ENCODE measurements at regions of chr2 and their contacts with region 1.

Region 1: DNA sequence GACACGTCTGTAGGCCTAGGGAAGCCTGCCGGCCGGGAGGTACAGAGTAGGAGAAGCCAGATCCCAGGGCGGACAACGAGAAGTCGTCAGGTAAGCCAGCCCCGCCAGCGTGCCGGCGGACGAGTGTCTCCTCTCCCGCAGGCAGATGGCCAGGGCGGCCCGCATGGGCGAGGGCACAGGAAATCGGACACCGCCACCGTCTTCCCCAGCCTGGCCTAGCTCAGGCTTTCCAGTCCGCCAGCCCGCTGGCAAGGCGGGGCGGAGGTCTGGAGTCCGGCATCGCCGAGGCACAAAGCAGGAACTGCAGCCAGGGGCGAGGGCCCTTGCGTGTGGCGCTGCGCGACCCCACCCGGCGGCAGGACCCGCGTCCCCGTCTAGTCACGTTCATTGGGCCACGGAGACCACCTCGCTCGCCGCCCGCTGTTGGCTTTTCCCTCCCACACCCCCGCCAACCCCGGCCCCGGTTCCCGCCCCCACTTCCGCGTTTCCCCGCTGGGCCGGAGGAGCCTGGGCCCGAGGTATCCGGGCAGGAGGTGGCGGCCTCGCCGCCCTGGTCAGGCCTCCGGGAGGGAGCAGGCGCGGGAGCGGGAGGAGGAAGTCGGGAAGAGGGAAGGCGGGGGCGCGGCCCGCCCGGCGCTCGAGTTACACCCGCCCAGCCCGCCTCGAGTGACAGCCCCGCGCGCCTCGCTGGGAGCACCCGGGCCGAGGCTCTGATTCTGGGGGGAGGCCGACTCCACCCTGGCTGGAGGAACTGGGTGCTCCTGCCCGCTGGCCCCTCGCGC is at the start of gene GPD2:
- DNase-seq: peak; percentile 96 to 98
- ATAC-seq: peak; percentile 98
- H3K4me3 ChIP-seq: peak within 1 kb of the TSS; percentile 71 to 78
- H3K27ac ChIP-seq: peak within 1 kb of the TSS; percentile 87 to 98
- H3K4me1 ChIP-seq: peaks cover 0 to 4% of the 10 kb centered on the region in 2 donors
- H3K27me3 ChIP-seq: no peaks in the 10 kb centered on the region
- total RNA-seq, gene GPD2: 16.3 to 31.3 TPM

Region 2: GRCh38 chr2:156341452-156342253 is 94.3 kb before region 1 on chr2:
- intact Hi-C with region 1: loop called in 1 of 2 experiments (anchors 2 kb)
- DNase-seq: peak; percentile 95 to 97
- ATAC-seq: peak; percentile 94
- H3K4me3 ChIP-seq: peak overlapping the region; percentile 75 to 99
- H3K27ac ChIP-seq: peak overlapping the region; percentile 97 to 100
- H3K4me1 ChIP-seq: no peaks in the 10 kb centered on the region
- H3K27me3 ChIP-seq: no peaks in the 10 kb centered on the region